Activated CD4-positive, alpha-beta T cell treated with anti-CD3 and anti-CD28 coated beads, Interleukin-2, amount 10 ng/mL, durations not matched to agents 7 days and 5 days (primary cell): ENCODE measurements at regions of chr16 and their contacts with region 1.

Region 1: GRCh38 chr16:58336332-58337089 is 41.7 kb upstream of the PRSS54 start:
- DNase-seq: peak; percentile 87
- H3K4me3 Mint-ChIP-seq: no peak overlapping the region
- H3K27ac Mint-ChIP-seq: no peak overlapping the region
- H3K4me1 Mint-ChIP-seq: peaks cover 8% of the 10 kb centered on the region
- H3K27me3 Mint-ChIP-seq: peaks cover 2% of the 10 kb centered on the region

Region 2: GRCh38 chr16:58426966-58427365 is 90.5 kb after region 1 on chr16:
- CTCF ChIA-PET with region 1: no interaction called
- POLR2A ChIA-PET with region 1: no interaction called
- DNase-seq: no peak
- H3K4me3 Mint-ChIP-seq: no peak overlapping the region
- H3K27ac Mint-ChIP-seq: no peak overlapping the region
- H3K4me1 Mint-ChIP-seq: peaks cover 20% of the 10 kb centered on the region
- H3K27me3 Mint-ChIP-seq: peaks cover 9% of the 10 kb centered on the region

Region 3: GRCh38 chr16:58487566-58488351 is 151.2 kb after region 1 on chr16:
- CTCF ChIA-PET with region 1: interaction called, 40 read pairs
- POLR2A ChIA-PET with region 1: no interaction called
- DNase-seq: peak; percentile 74
- H3K4me3 Mint-ChIP-seq: no peak overlapping the region
- H3K27ac Mint-ChIP-seq: no peak overlapping the region
- H3K4me1 Mint-ChIP-seq: peaks cover 3% of the 10 kb centered on the region
- H3K27me3 Mint-ChIP-seq: peaks cover 1% of the 10 kb centered on the region

Region 4: GRCh38 chr16:58755989-58756649 is 419.6 kb after region 1 on chr16:
- CTCF ChIA-PET with region 1: interaction called, 10 read pairs
- POLR2A ChIA-PET with region 1: no interaction called
- DNase-seq: peak; percentile 86
- H3K4me3 Mint-ChIP-seq: peak overlapping the region; percentile 7
- H3K27ac Mint-ChIP-seq: peak overlapping the region; percentile 78
- H3K4me1 Mint-ChIP-seq: peaks cover 10% of the 10 kb centered on the region
- H3K27me3 Mint-ChIP-seq: no peaks in the 10 kb centered on the region